ENCODE measurements at regions of chr10 and their contacts with region 1.

Region 1: GRCh38 chr10:127945335-127945734 is 38.4 kb downstream of the PTPRE start:
- DNase-seq: peak; percentile 62 to 96
- H3K4me3 ChIP-seq: no peak overlapping the region
- H3K27ac ChIP-seq: peak overlapping the region; percentile 72
- H3K4me1 ChIP-seq: peaks cover 28% of the 10 kb centered on the region
- H3K27me3 ChIP-seq: no peaks in the 10 kb centered on the region
- CTCF ChIP-seq: no peak

Region 2: DNA sequence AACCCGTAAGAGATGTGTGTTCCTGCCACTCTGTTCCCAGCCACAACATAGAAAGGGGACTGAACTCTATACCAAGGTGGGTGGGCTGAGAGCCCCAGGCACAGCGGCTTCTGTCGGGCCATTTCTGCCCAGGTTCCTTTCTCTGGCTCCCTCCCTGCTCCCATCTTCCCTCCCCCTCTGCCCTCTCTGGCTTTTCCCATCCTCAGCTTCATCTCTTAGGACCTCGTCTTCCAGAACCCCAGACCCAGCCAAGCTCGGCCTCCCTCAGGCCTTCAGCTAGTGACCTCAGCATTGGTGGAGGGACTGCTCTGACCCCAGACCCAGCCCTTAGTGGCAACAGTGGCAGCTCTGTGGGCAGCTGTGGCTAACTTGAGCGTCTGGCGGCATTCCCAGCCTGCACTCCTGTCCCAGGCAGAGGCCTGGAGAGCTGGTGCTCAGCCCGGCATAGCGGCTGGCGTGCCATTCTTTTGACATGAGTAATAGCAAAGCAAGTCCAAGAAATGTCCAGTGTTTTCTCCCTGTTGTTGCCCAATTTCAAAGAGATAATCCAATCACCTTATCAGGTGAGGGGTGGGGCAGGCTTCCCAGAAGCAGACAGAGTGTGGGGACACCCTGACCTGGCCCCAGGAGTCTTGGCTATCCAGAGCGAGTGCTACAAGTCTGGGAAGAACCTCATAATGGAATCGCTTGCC is 22.5 kb before region 1 on chr10:
- CTCF ChIA-PET with region 1: no interaction called
- POLR2A ChIA-PET with region 1: no interaction called
- intact Hi-C with region 1: no loop called
- DNase-seq: peak; percentile 87 to 91
- H3K4me3 ChIP-seq: no peak overlapping the region
- H3K27ac ChIP-seq: peak overlapping the region; percentile 66
- H3K4me1 ChIP-seq: peaks cover 37% of the 10 kb centered on the region
- H3K27me3 ChIP-seq: no peaks in the 10 kb centered on the region
- CTCF ChIP-seq: no peak

Region 3: GRCh38 chr10:127977357-127978009 is 32.1 kb after region 1 on chr10:
- CTCF ChIA-PET with region 1: no interaction called
- POLR2A ChIA-PET with region 1: no interaction called
- intact Hi-C with region 1: loop called (anchors 2 kb)
- DNase-seq: peak; percentile 55 to 58
- H3K4me3 ChIP-seq: no peak overlapping the region; the same call in 1 of the 2 replicates
- H3K27ac ChIP-seq: peak overlapping the region; percentile 60
- H3K4me1 ChIP-seq: peaks cover 25% of the 10 kb centered on the region
- H3K27me3 ChIP-seq: no peaks in the 10 kb centered on the region
- CTCF ChIP-seq: no peak

Region 4: DNA sequence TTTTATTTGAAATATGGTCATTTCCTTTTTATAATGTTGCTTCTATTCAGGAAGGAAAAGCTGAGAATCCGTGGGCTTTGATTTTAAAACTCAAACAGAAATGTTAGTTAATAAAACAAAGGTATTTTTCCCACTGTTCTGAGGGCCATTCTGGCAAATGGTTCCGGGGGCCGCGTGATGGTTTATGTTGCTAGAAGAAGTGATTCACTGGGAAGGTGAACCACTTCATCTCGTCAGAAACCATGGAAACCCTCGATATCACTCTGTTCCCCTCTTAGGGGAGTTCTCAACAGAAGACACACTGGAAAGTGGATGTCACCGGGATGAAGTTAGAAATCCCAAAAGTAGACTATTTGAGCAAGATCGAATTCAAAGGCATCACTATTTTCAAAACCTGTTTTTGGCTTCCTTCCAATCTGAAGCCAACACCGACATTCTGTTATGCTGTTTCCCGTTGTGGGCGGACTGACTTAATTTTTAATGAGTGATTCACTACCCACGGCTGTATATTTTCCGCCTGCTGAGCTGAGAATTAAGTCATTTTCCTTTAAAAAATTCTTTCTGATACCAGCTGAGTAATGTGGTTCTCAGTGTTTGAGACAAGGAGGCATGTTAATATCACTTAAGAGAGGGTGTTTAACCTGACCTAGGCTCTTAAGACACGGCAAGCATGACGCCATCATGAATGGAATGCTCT is 45.7 kb after region 1 on chr10:
- CTCF ChIA-PET with region 1: no interaction called
- POLR2A ChIA-PET with region 1: no interaction called
- intact Hi-C with region 1: loop called (anchors 1 kb)
- DNase-seq: peak; percentile 25 to 87
- H3K4me3 ChIP-seq: peak overlapping the region; percentile 30; the same call in 1 of the 2 replicates
- H3K27ac ChIP-seq: peak overlapping the region; percentile 90
- H3K4me1 ChIP-seq: peaks cover 44% of the 10 kb centered on the region
- H3K27me3 ChIP-seq: no peaks in the 10 kb centered on the region
- CTCF ChIP-seq: no peak

Measured in PC-9 (cell line).